CD4-positive, alpha-beta T cell (primary cell): ENCODE measurements at regions of chr19 and their contacts with region 1.

Region 1: GRCh38 chr19:18304458-18305310 is 18.2 kb downstream of the LSM4 start:
- DNase-seq: peak; percentile 62 to 91 (median 81)
- ATAC-seq: peak; percentile 74
- H3K4me3 ChIP-seq: peak overlapping the region; percentile 63
- H3K4me3 Mint-ChIP-seq: peak overlapping the region; percentile 96
- H3K27ac ChIP-seq: peak overlapping the region; percentile 92 to 96
- H3K27ac Mint-ChIP-seq: peak overlapping the region; percentile 98
- H3K4me1 ChIP-seq: peaks cover 79% of the 10 kb centered on the region
- H3K4me1 Mint-ChIP-seq: peaks cover 47% of the 10 kb centered on the region
- H3K27me3 ChIP-seq: no peaks in the 10 kb centered on the region
- H3K27me3 Mint-ChIP-seq: no peaks in the 10 kb centered on the region
- CTCF ChIP-seq: no peak

Region 2: DNA sequence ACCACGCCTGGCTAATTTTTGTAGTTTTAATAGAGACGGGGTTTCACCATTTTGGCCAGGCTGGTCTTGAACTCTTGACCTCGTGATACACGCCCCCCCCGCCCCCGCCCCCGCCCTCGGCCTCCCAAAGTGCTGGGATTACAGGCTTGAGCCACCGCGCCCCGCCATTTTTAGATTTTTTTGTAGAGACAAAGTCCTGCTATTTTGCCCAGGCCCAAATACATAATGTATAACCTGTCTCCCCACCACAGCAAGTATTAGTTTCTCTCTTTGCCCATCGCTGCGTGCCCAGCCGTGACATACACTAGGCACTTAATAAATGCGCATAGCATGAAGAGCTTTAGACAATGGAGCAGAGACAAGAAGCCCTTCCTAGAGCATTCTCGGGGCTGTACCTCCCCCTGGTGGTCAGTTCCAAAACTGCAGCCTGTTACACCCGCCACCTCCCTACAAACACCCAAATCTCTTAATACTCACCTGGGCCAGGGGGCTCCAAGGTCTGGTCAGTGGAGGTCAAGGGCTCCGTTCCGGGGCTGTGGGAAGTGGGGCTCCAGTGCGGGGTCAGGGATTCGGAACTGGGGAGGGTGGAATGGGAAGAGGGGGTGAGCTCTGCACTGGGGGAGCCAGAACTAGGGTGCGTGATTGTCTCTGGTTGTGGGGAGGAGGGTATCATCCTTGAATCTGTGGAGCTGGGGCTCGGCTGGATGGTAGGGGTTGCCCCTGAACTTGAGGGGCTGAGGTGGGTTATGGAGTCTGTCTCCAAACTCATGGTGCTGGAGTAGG is 52.9 kb before region 1 on chr19:
- CTCF ChIA-PET with region 1: no interaction called
- POLR2A ChIA-PET with region 1: no interaction called
- intact Hi-C with region 1: no loop called
- DNase-seq: peak; percentile 65 to 90 (median 81)
- ATAC-seq: peak; percentile 91
- H3K4me3 ChIP-seq: no peak overlapping the region
- H3K4me3 Mint-ChIP-seq: no peak overlapping the region
- H3K27ac ChIP-seq: no peak overlapping the region
- H3K27ac Mint-ChIP-seq: no peak overlapping the region
- H3K4me1 ChIP-seq: peaks cover 8% of the 10 kb centered on the region
- H3K4me1 Mint-ChIP-seq: no peaks in the 10 kb centered on the region
- H3K27me3 ChIP-seq: peaks cover 8 to 12% of the 10 kb centered on the region in 2 experiments
- H3K27me3 Mint-ChIP-seq: peaks cover 31% of the 10 kb centered on the region
- CTCF ChIP-seq: peak; percentile 80

Region 3: GRCh38 chr19:18291590-18292461 is 12.9 kb before region 1 on chr19:
- CTCF ChIA-PET with region 1: interaction called, 7 read pairs
- POLR2A ChIA-PET with region 1: interaction called, 761 read pairs
- intact Hi-C with region 1: loop called in 1 of 2 experiments (anchors 1 kb)
- DNase-seq: peak; percentile 51 to 93 (median 69)
- ATAC-seq: peak; percentile 41
- H3K4me3 ChIP-seq: peak overlapping the region; percentile 91
- H3K4me3 Mint-ChIP-seq: peak overlapping the region; percentile 89
- H3K27ac ChIP-seq: peak overlapping the region; percentile 96 to 100
- H3K27ac Mint-ChIP-seq: peak overlapping the region; percentile 91
- H3K4me1 ChIP-seq: peaks cover 67% of the 10 kb centered on the region
- H3K4me1 Mint-ChIP-seq: peaks cover 61% of the 10 kb centered on the region
- H3K27me3 ChIP-seq: no peaks in the 10 kb centered on the region
- H3K27me3 Mint-ChIP-seq: no peaks in the 10 kb centered on the region
- CTCF ChIP-seq: no peak

Region 4: GRCh38 chr19:18322759-18323460 is 18.2 kb after region 1 on chr19 and contains the start of gene LSM4:
- CTCF ChIA-PET with region 1: interaction called, 15 read pairs
- POLR2A ChIA-PET with region 1: interaction called, 58 read pairs
- intact Hi-C with region 1: loop called (anchors 1 to 2 kb)
- DNase-seq: peak; percentile 99 to 100 (median 100)
- ATAC-seq: peak; percentile 91
- H3K4me3 ChIP-seq: peak within 1 kb of the TSS; percentile 87
- H3K4me3 Mint-ChIP-seq: peak within 1 kb of the TSS; percentile 73
- H3K27ac ChIP-seq: peak within 1 kb of the TSS; percentile 83 to 86
- H3K27ac Mint-ChIP-seq: peak within 1 kb of the TSS; percentile 90
- H3K4me1 ChIP-seq: peaks cover 63% of the 10 kb centered on the region
- H3K4me1 Mint-ChIP-seq: peaks cover 54% of the 10 kb centered on the region
- H3K27me3 ChIP-seq: no peaks in the 10 kb centered on the region
- H3K27me3 Mint-ChIP-seq: no peaks in the 10 kb centered on the region
- CTCF ChIP-seq: peak; percentile 73
- total RNA-seq, gene LSM4: 40.2 to 47.4 TPM

Region 5: DNA sequence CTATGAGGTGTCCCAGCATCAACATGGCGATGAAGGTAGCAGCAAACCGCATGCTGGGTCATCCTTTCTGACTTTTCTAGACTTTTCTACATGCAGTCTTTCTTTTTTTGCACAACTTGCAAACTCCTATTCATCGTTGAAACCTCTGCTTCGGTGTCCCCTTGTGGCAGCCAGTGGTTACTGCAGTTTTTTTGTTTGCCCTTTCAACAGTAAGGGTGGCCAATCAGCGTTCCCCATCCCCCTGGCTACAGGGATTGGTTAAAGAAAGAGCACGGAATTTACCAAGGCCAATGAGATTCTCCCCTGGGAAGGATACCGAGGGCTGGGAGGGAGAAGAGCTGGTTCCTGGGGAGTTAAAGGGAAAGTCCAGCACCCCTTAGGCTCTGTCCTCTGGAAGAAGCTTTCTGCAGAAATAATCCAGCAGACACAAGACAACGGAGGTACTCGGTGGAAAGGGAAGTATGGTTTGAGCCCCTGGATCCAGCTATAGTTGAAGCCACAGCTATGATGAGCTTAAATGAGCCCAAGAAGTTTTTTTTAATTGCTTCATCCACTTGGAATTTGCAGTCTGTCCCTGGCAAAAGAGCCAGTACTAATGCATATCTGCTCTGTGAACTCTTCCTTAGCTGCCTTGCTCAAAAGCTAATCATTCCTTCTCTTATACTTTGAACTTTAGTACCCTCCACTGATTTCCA is 23.8 kb after region 1 on chr19:
- CTCF ChIA-PET with region 1: interaction called, 5 read pairs
- POLR2A ChIA-PET with region 1: interaction called, 10 read pairs
- intact Hi-C with region 1: loop called (anchors 1 to 2 kb)
- DNase-seq: peak; percentile 76 to 94 (median 82)
- ATAC-seq: peak; percentile 99
- H3K4me3 ChIP-seq: peak overlapping the region; percentile 31
- H3K4me3 Mint-ChIP-seq: peak overlapping the region; percentile 47
- H3K27ac ChIP-seq: no peak overlapping the region
- H3K27ac Mint-ChIP-seq: peak overlapping the region; percentile 6
- H3K4me1 ChIP-seq: peaks cover 24% of the 10 kb centered on the region
- H3K4me1 Mint-ChIP-seq: peaks cover 17% of the 10 kb centered on the region
- H3K27me3 ChIP-seq: no peaks in the 10 kb centered on the region
- H3K27me3 Mint-ChIP-seq: no peaks in the 10 kb centered on the region
- CTCF ChIP-seq: peak; percentile 92